ENCODE measurements at regions of chr10 and their contacts with region 1.

Region 1: GRCh38 chr10:130110246-130111112 is at the start of gene C10orf143:
- H3K4me3 ChIP-seq: peak within 1 kb of the TSS; percentile 72
- H3K27ac ChIP-seq: peak within 1 kb of the TSS; percentile 94
- H3K4me1 ChIP-seq: no peaks in the 10 kb centered on the region
- CTCF ChIP-seq: no peak

Region 2: DNA sequence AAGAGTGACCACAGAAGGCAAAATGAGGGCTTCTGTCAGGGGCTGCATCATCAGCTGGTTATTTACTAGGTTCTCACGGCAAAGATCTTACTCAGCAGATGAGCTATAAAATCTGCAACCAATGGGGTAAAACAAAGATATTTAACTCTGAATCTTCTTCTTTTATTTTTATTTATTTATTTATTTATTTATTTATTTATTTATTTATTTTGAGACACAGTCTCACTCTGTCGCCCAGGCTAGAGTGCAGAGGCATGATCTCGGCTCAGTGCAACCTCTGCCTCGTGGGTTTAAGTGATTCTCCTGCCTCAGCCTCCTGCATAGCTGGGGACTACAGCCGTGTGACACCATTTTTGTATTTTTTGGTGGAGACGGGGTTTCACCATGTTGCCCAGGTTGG is 11.1 kb before region 1 on chr10:
- CTCF ChIA-PET with region 1: interaction called, 14 read pairs
- POLR2A ChIA-PET with region 1: interaction called, 10 read pairs
- H3K4me3 ChIP-seq: no peak overlapping the region
- H3K27ac ChIP-seq: no peak overlapping the region
- H3K4me1 ChIP-seq: no peaks in the 10 kb centered on the region
- CTCF ChIP-seq: no peak

Region 3: GRCh38 chr10:130127364-130128061 is 17.0 kb after region 1 on chr10:
- CTCF ChIA-PET with region 1: interaction called, 14 read pairs
- POLR2A ChIA-PET with region 1: interaction called, 23 read pairs
- H3K4me3 ChIP-seq: no peak overlapping the region
- H3K27ac ChIP-seq: no peak overlapping the region
- H3K4me1 ChIP-seq: peaks cover 2% of the 10 kb centered on the region; the same call in 1 of the 2 replicates
- CTCF ChIP-seq: peak; percentile 68

Region 4: GRCh38 chr10:130136226-130137089 is 26.0 kb after region 1 on chr10 and contains the start of gene GLRX3:
- CTCF ChIA-PET with region 1: interaction called, 9 read pairs
- POLR2A ChIA-PET with region 1: interaction called, 127 read pairs
- H3K4me3 ChIP-seq: peak within 1 kb of the TSS; percentile 80
- H3K27ac ChIP-seq: peak within 1 kb of the TSS; percentile 88
- H3K4me1 ChIP-seq: peaks cover 20% of the 10 kb centered on the region
- CTCF ChIP-seq: peak; percentile 46; the same call in 1 of the 2 replicates